ENCODE measurements at regions of chr12 and their contacts with region 1.

Region 1: DNA sequence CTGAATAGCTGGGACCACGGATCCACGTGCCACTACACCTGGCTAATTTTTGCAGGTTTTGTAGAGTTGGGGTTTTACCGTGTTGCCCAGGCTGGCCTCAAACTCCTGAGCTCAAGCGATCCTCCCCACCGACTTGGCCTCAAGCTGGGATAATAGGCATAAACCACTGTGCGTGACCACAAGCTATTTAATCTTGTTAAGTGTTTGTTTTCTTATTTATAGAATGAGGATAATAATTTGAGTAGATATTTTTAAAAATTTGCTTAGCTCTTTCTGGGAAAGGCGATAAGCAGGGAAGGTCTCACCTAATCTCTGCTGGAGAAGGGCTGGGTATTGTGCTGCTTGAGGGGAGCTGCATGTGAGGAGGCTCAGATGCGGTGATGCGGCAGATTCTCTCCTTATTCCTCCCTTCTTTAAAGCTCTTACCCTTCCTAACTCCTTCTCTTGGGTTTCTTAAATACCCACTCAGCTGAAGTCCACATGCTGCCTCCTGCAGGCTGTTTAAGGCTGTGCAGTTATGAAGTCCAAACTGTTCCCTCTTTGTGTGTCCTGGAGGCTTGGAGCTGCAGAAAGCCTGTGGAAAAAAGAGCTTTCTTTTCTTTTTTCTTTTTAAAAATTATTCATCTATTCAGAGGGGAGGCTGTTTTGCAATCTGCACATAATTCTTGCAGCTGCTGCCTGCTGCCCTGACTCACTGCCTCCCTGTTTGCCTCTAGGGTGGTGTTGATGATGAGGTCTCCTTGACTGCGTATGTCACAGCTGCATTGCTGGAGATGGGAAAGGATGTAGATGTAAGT is 37.9 kb downstream of the A2ML1 start:
- DNase-seq: peak; percentile 5
- H3K4me3 ChIP-seq: no peak overlapping the region
- CTCF ChIP-seq: peak; percentile 60

Region 2: DNA sequence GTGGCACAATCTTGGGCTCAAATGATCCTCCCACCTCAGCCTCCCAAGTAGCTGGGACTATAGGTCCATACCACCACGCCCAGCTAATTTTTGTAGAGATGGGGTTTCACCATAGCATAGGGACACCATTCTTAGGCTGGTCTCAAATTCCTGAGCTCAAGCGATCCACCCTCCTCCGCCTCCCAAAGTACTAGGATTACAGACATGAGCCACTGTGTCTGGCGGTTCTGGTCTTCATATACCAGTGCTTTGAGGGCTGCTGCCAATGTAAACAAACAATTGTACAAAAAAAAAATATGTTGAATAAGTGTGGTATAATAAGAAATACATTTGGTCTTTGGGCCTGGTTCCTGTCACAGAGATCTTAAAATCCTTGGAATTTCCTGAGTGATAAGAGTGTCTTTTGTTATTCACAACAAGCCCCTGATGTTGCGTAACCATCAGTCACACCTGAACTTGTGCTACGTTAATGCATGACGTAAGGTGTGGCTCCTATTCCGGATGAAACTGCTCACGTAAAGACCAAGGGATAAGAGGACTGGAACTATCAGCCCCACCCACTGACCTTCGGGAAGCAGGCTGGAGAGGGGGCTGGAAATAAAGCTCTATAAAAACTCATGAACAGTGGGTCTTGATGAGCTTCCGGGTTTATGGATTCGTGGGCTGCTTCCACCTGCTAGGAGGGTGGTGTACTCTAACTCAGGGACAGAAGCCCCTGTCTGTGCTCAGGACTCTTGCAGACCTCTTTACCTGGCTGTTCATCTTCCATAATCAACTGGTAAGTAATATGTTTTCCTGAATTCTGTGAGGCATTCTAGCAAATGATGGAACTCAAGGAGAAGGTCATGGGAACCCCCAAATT is 179.1 kb before region 1 on chr12:
- CTCF ChIA-PET with region 1: interaction called, 45 read pairs
- POLR2A ChIA-PET with region 1: no interaction called
- DNase-seq: no peak
- H3K4me3 ChIP-seq: no peak overlapping the region
- CTCF ChIP-seq: no peak

Region 3: GRCh38 chr12:8687846-8688601 is 172.3 kb before region 1 on chr12:
- CTCF ChIA-PET with region 1: interaction called, 45 read pairs
- POLR2A ChIA-PET with region 1: no interaction called
- DNase-seq: no peak
- H3K4me3 ChIP-seq: peak overlapping the region; percentile 24
- CTCF ChIP-seq: no peak

Region 4: DNA sequence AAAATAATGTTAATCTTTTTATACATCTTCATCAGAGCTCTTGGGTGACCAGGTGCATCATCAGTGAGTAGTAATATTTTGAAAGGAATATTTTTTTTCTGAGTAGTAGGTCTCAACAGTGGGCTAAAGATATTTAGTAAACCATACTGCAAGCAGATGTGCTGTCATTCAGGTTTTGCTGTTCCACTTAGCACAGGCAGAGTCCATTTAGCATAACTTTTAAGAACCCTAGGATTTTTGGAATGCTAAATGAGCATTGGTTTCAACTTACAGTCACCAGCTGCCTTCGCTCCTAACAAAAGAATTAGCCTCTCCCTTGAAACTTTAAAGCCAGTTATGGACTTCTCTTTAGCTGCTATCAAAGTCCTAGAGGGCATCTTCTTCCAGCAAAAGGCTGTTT is 138.1 kb before region 1 on chr12:
- CTCF ChIA-PET with region 1: no interaction called
- POLR2A ChIA-PET with region 1: no interaction called
- DNase-seq: no peak
- H3K4me3 ChIP-seq: no peak overlapping the region
- CTCF ChIP-seq: no peak

Region 5: GRCh38 chr12:8780389-8780788 is 80.0 kb before region 1 on chr12:
- CTCF ChIA-PET with region 1: interaction called, 11 read pairs
- POLR2A ChIA-PET with region 1: interaction called, 3 read pairs
- DNase-seq: peak; percentile 21
- H3K4me3 ChIP-seq: no peak overlapping the region
- CTCF ChIP-seq: peak; percentile 26

Region 6: DNA sequence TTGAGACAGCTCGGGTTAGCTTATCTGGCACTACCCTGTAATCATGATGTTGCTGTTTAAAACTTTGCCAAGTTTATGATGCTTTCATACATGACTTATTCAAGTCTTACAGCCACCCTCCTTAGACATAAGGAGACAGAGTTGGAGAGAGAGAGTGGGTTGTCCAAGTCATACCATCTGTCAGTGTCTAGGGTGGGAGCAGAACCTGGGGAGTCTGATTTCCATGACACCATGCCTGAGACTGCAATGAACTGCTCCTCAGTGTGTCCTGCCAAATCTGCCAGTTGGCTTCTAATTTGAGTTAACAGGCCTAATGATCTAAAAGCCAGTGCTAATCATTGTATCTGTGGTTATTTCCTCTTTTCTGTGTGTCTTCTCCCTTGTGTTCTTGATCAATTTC is 10.2 kb after region 1 on chr12:
- CTCF ChIA-PET with region 1: interaction called, 12 read pairs
- POLR2A ChIA-PET with region 1: no interaction called
- DNase-seq: no peak
- H3K4me3 ChIP-seq: no peak overlapping the region
- CTCF ChIP-seq: no peak

Region 7: DNA sequence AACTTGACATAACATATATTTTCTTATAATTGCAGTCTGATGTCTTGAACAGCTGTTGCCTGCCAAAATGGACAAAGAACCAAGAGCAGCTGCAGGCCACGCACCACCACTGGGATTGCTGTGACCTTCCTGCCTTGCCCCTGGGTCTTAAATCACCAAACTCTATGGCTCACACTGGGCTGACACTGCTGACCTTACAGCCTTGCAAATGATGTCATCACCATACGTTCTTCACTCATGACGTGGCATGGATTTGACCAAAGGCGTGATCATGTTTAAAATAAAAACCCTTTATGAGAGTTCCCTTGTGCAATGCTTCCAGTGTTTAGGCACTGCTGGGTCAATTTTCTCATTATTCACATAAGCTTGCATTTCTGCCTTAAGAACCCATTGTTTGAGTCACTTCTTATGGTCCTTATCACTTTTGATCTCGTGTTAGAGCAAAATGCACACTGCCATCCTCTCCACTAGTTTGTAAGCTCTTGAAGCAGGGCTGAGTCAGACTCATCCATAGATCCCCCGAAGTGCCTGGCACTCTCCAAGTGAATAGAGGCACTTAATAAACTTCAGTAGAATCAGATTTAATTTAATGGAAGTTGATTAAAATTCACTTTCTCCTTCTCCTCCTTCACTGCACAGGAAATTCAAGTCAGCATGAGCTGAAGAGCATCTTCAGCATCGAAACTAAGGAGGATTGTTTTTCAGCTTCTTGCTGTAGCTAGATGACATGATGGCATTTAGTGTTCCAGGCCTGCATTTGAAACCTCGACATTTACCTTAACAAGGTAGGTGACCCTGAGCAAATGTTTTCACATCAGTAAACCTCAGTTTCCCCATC is 480.3 kb after region 1 on chr12:
- CTCF ChIA-PET with region 1: no interaction called
- POLR2A ChIA-PET with region 1: no interaction called
- DNase-seq: no peak
- H3K4me3 ChIP-seq: no peak overlapping the region
- CTCF ChIP-seq: no peak